Ascending aorta (tissue), 2 donors: ENCODE measurements at regions of chr4 and their contacts with region 1.

Region 1: DNA sequence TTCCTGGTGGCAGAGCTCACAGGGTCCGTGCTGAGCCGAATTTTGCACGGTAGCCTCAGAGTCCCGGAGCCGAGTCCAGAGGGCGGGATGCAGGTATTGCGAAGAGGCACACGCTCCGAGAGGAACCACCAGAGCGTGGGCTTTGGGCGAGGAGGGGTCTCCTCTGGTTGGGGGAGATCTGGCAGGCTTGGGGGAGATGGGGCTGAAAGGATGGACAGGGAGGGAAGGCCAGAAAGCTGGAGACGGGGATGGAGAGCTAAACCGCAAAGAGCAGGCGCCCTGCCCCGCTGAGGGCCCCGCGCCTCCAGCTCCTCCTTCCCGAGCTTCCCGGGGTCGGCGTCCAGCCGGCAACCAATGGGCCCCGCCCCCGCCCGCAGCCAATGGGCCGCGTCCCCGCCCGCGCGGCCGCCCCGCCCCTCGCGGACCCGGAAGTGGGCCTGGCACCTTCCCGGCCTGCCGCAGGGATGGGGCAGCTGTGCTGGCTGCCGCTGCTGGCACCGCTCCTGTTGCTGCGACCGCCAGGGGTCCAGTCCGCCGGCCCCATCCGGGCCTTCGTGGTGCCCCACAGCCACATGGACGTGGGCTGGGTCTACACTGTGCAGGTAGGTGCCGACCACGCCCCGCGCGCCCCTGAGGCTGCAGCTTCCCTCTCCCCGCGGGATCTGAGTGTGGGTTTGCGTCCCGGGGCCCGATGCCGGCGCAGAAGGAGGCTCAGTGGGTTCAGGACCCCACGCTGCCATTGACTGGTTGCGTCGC is at the start of gene MAN2B2:
- DNase-seq: peak; percentile 24 to 94
- H3K4me3 ChIP-seq: peak within 1 kb of the TSS; percentile 75 to 93
- H3K27ac ChIP-seq: peak within 1 kb of the TSS; percentile 68 to 69
- H3K4me1 ChIP-seq: peaks cover 7 to 13% of the 10 kb centered on the region in 2 donors
- H3K27me3 ChIP-seq: no peaks in the 10 kb centered on the region
- CTCF ChIP-seq: no peak
- total RNA-seq, gene MAN2B2: 47.8 TPM

Region 2: DNA sequence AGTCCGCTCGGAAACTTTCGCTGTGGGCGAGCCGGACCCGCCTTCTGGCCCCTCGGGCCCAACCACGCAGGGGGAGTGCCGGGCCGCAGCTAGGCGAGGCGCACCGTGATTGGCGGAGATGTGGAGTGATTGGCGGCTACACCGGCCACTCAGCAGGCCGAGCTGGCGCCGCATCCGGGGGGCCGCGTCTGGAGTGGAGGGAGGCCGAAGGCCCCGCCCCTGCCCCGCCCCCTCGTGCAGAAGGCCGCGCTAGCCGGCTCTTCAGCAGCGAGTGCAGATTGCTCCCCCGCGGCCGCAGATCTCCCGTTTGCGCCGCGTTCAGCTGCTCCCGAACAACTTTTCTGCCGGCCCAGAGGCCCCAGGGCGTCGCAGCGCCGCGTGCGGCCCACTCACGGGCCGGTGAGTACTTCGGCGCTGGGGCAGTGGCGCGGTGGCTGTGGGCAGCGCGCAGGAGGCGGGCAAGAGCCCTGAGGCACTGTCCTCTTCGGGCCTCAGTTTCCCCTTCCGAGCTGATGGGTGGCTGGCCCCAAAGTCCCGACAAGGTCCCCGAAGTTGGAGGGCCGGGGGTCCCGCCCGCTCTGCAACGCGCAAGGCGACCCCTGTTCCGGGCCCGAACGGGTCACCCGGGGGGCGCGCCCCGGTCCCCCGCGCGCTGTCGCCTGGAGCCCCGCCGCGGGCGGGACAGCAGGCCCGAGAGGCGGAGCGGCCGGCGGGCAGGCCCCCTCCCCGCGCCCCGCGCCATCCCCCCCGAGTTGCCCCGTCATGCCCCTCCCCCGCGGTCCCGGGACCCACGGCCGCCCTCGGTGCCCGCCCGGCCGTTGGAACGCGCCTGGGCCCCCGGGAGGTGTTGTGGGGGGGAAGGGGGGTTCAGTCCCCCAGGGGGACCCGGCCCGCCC is 305.1 kb before region 1 on chr4 and contains the start of gene WFS1:
- intact Hi-C with region 1: loop called (anchors 10 kb)
- DNase-seq: peak; percentile 92 to 99
- H3K4me3 ChIP-seq: peak within 1 kb of the TSS; percentile 82 to 95
- H3K27ac ChIP-seq: peak within 1 kb of the TSS; percentile 87
- H3K4me1 ChIP-seq: peaks cover 25 to 38% of the 10 kb centered on the region in 2 donors
- H3K27me3 ChIP-seq: no peaks in the 10 kb centered on the region
- CTCF ChIP-seq: no peak
- total RNA-seq, gene WFS1: 166 TPM

Region 3: DNA sequence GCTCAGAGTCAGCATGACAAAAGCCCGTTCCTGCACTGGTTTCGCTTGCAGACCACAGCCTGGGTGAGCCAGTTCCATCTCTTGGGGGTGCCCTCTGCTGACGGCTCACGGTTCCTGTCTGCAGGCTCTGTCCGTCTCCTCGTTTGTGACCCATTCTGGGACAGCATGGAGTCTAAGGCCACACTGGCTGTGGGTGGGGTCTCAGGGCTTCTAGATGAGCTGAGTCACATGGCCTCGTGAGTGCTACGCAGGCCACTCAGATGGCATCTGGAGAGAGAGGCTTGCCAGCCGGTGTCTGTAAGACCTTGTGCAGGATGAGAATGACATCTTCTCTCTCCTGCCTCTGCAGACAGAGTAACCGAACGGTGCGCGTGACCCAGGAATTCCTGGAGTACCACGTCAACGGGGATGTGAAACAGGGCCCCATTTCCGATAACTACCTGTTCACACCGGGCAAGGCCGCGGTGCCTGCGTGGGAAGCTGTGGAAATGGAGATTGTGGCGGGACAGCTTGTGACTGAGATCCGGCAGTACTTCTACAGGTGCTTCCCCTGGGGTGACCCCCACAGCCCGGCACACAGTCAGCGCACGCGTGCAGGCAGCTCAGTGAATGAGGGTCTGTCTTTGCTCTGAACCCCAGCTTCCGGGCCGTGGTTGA is 34.0 kb after region 1 on chr4:
- intact Hi-C with region 1: no loop called
- DNase-seq: no peak
- H3K4me3 ChIP-seq: no peak overlapping the region
- H3K27ac ChIP-seq: no peak overlapping the region
- H3K4me1 ChIP-seq: no peaks in the 10 kb centered on the region
- H3K27me3 ChIP-seq: no peaks in the 10 kb centered on the region
- CTCF ChIP-seq: no peak

Region 4: GRCh38 chr4:6658597-6659075 is 83.7 kb after region 1 on chr4:
- intact Hi-C with region 1: no loop called
- DNase-seq: no peak
- H3K4me3 ChIP-seq: peak overlapping the region; percentile 62 to 69
- H3K27ac ChIP-seq: peak overlapping the region; percentile 76 to 88
- H3K4me1 ChIP-seq: peaks cover 4 to 6% of the 10 kb centered on the region in 2 donors
- H3K27me3 ChIP-seq: no peaks in the 10 kb centered on the region
- CTCF ChIP-seq: no peak

Region 5: DNA sequence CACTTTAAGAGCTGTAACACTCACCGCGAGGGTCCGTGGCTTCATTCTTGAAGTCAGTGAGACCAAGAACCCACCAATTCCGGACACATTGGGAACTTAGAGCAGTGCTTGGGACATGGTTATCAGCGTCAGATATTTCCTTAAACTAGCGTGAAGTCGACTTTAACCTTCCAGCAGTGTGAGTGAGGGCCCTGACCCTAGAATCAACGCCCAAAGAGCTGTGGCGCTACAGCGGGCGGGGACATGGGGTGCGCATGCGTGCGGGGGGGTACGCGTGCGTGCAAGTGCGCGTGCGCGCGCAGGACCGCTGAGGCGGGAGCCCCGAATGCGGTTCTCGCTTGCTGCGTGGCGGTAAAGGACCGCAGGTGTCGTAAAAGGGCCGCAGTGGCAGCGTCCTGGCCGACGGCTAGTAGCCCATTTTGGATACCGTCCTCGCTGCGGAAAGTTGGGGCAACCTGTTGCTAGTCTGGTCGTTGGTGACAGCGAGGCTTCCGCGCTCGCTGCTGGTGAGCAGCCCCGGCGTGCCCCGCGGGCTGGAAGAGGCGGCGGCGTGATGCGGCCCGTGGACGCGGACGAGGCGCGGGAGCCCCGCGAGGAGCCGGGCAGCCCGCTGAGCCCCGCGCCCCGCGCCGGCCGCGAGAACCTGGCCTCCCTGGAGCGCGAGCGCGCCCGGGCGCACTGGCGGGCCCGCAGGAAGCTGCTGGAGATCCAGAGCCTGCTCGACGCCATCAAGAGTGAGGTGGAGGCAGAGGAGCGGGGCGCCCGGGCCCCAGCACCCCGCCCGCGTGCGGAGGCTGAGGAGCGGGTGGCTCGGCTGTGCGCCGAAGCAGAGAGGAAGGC is 99.0 kb after region 1 on chr4:
- intact Hi-C with region 1: loop called (anchors 10 kb)
- DNase-seq: peak; percentile 84 to 96
- H3K4me3 ChIP-seq: peak overlapping the region; percentile 93
- H3K27ac ChIP-seq: peak overlapping the region; percentile 68 to 87
- H3K4me1 ChIP-seq: peaks cover 14 to 26% of the 10 kb centered on the region in 2 donors
- H3K27me3 ChIP-seq: no peaks in the 10 kb centered on the region
- CTCF ChIP-seq: no peak

Region 6: GRCh38 chr4:6873792-6874461 is 299.0 kb after region 1 on chr4:
- intact Hi-C with region 1: no loop called
- DNase-seq: peak in 1 of 2 donors; percentile 83
- H3K4me3 ChIP-seq: no peak overlapping the region
- H3K27ac ChIP-seq: no peak overlapping the region
- H3K4me1 ChIP-seq: no peaks in the 10 kb centered on the region
- H3K27me3 ChIP-seq: no peaks in the 10 kb centered on the region
- CTCF ChIP-seq: peak; percentile 79 to 84 (median 84)

Region 7: DNA sequence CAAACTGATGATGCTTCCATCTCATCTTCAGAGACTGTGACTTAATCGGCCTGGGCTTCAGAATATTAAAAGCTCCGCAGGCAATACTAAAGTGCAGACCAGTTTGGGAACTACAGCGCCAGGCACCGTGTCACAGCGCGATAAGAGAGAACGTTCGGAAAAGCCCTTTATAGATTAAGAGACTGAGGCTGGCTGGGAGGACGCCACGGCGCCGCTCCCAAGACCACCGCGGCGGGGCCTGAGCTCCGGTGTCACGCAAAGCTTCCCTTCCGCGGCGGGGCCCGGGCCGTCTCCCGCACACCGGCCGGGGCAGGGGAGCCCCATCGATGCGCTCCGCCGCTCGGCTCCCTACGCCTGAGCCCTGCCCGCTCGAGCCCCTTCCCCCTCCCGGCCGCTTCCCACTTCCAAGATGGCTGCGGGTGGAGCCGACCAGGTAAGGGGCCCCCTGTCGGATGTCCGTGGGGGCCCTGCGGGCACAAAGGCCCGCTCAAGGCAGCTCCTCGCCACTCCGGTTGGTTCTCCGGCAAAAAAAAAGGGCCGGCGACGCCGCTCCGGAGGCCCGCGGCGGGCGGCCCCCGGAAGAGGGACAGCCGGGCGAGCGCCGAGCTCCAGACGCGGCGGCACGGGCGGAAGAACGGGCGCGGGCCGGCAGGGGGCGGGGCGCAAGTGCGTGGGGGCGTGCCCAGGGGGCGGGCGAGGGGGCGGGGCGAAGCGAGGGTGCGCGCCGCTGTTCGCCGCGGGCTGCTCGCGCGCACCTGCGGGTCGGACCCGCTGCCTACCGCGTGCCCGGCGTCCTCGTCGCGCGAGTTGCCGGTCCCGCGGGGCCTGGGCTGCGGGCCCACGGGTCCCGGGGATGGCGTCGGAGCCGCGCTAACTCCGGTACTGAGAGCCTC is 334.4 kb after region 1 on chr4 and contains the start of gene TBC1D14:
- intact Hi-C with region 1: loop called (anchors 1 kb)
- DNase-seq: peak; percentile 54 to 93
- H3K4me3 ChIP-seq: peak within 1 kb of the TSS; percentile 84 to 94
- H3K27ac ChIP-seq: peak within 1 kb of the TSS; percentile 97 to 99
- H3K4me1 ChIP-seq: peaks cover 0 to 32% of the 10 kb centered on the region in 2 donors
- H3K27me3 ChIP-seq: no peaks in the 10 kb centered on the region
- CTCF ChIP-seq: peak in 1 of 3 experiments; percentile 4
- total RNA-seq, gene TBC1D14: 26.4 TPM

Region 8: GRCh38 chr4:7067452-7068278 is 492.7 kb after region 1 on chr4 and contains the start of gene GRPEL1:
- intact Hi-C with region 1: loop called (anchors 10 kb)
- DNase-seq: peak; percentile 98 to 100
- H3K4me3 ChIP-seq: peak within 1 kb of the TSS; percentile 90 to 94
- H3K27ac ChIP-seq: peak within 1 kb of the TSS; percentile 86 to 95
- H3K4me1 ChIP-seq: peaks cover 10 to 18% of the 10 kb centered on the region in 2 donors
- H3K27me3 ChIP-seq: no peaks in the 10 kb centered on the region
- CTCF ChIP-seq: peak in 1 of 3 experiments; percentile 4
- total RNA-seq, gene GRPEL1: 42.5 TPM

Region 9: GRCh38 chr4:7101692-7102515 is 527.0 kb after region 1 on chr4:
- intact Hi-C with region 1: loop called (anchors 10 kb)
- DNase-seq: peak in 1 of 2 donors; percentile 83
- H3K4me3 ChIP-seq: peak overlapping the region; percentile 57 to 70
- H3K27ac ChIP-seq: peak overlapping the region; percentile 83 to 84
- H3K4me1 ChIP-seq: peaks cover 5 to 20% of the 10 kb centered on the region in 2 donors
- H3K27me3 ChIP-seq: no peaks in the 10 kb centered on the region
- CTCF ChIP-seq: peak; percentile 41 to 72 (median 69)

Region 10: DNA sequence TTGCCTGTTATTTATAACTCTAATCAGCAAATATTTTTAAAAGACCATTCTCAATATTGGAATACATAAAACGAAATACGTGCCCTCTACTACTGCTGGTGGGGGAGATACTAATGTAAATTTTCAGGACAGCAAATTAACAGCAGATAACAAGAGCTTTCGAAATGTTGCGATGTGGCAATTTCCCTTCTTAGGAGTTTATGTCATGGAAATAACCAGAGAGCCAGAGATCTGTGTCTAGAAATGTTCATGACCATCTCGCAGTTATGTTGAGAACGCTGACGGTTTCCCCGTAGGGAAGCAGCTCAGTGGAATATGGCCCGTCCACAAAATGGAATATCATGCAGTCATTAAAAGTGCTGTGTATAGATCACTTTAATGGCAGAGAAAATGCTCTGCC is 1098.2 kb after region 1 on chr4:
- intact Hi-C with region 1: no loop called
- DNase-seq: no peak
- H3K4me3 ChIP-seq: no peak overlapping the region
- H3K27ac ChIP-seq: no peak overlapping the region
- H3K4me1 ChIP-seq: no peaks in the 10 kb centered on the region
- H3K27me3 ChIP-seq: no peaks in the 10 kb centered on the region
- CTCF ChIP-seq: no peak